GM12878 (cell line): ENCODE measurements at regions of chr2 and their contacts with region 1.

Region 1: GRCh38 chr2:122748552-122749011 is 993.1 kb downstream of the TSN start:
- DNase-seq: no peak
- ATAC-seq: peak; percentile 55
- H3K4me3 ChIP-seq: no peak overlapping the region
- H3K27ac ChIP-seq: no peak overlapping the region
- H3K4me1 ChIP-seq: no peaks in the 10 kb centered on the region
- H3K27me3 ChIP-seq: no peaks in the 10 kb centered on the region
- CTCF ChIP-seq: peak in 1 of 3 experiments; percentile 34; a peak in 2 of 6 replicates
- EP300 ChIP-seq: no peak
- POLR2A ChIP-seq: no peak
- RAD21 ChIP-seq: peak; percentile 51; the same call in 1 of the 2 replicates

Region 2: GRCh38 chr2:121974897-121975661 is 773.5 kb before region 1 on chr2:
- CTCF ChIA-PET with region 1: interaction called, 5 read pairs
- POLR2A ChIA-PET with region 1: no interaction called
- RAD21 ChIA-PET with region 1: interaction called, 3 read pairs
- SMC1A ChIA-PET with region 1: interaction called, 3 read pairs
- in situ Hi-C with region 1: loop called (anchors 10 kb)
- intact Hi-C with region 1: loop called (anchors 2 kb)
- DNase-seq: peak; percentile 60
- ATAC-seq: peak; percentile 98
- H3K4me3 ChIP-seq: peak overlapping the region; percentile 45; the same call in 1 of the 2 replicates
- H3K27ac ChIP-seq: no peak overlapping the region
- H3K4me1 ChIP-seq: no peaks in the 10 kb centered on the region
- H3K27me3 ChIP-seq: no peaks in the 10 kb centered on the region
- CTCF ChIP-seq: peak; percentile 52 to 75 (median 64); a peak in 5 of 6 replicates
- EP300 ChIP-seq: no peak
- POLR2A ChIP-seq: no peak
- RAD21 ChIP-seq: peak; percentile 76

Region 3: DNA sequence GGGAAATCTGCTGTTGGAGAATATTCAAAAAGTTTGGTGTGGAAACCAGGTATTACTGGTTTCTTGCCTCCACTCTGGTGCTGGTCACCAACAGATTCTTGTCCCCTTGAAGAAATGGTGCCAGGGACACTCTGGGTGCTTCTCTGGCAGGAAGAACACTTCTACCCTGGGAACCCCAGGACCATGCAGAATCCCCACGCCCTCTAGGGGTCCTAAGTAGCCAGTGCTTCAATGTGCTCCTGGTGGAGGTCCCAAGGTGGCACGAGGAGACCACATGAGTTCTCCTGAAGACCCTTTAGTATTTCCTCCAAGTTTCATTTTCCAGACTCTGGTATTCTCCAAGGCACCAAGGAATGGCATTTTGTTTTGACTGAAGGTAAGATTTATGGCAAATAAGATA is 612.5 kb before region 1 on chr2:
- CTCF ChIA-PET with region 1: no interaction called
- POLR2A ChIA-PET with region 1: no interaction called
- RAD21 ChIA-PET with region 1: no interaction called
- SMC1A ChIA-PET with region 1: no interaction called
- in situ Hi-C with region 1: no loop called
- intact Hi-C with region 1: loop called (anchors 5 kb)
- DNase-seq: no peak
- ATAC-seq: peak; percentile 91
- H3K4me3 ChIP-seq: no peak overlapping the region
- H3K27ac ChIP-seq: no peak overlapping the region
- H3K4me1 ChIP-seq: no peaks in the 10 kb centered on the region
- H3K27me3 ChIP-seq: no peaks in the 10 kb centered on the region
- CTCF ChIP-seq: peak; percentile 63 to 87 (median 82)
- EP300 ChIP-seq: no peak
- POLR2A ChIP-seq: no peak
- RAD21 ChIP-seq: peak; percentile 63

Region 4: GRCh38 chr2:122191341-122191740 is 557.2 kb before region 1 on chr2:
- CTCF ChIA-PET with region 1: interaction called, 6 read pairs
- POLR2A ChIA-PET with region 1: no interaction called
- RAD21 ChIA-PET with region 1: interaction called, 7 read pairs
- SMC1A ChIA-PET with region 1: interaction called, 11 read pairs
- in situ Hi-C with region 1: no loop called
- intact Hi-C with region 1: loop called (anchors 1 kb)
- DNase-seq: no peak
- ATAC-seq: peak; percentile 95
- H3K4me3 ChIP-seq: no peak overlapping the region
- H3K27ac ChIP-seq: no peak overlapping the region
- H3K4me1 ChIP-seq: no peaks in the 10 kb centered on the region
- H3K27me3 ChIP-seq: no peaks in the 10 kb centered on the region; a peak in 1 of 4 replicates
- CTCF ChIP-seq: peak; percentile 38 to 71 (median 57); a peak in 5 of 6 replicates
- EP300 ChIP-seq: no peak
- POLR2A ChIP-seq: no peak
- RAD21 ChIP-seq: peak; percentile 66

Region 5: GRCh38 chr2:122535960-122536505 is 212.5 kb before region 1 on chr2:
- CTCF ChIA-PET with region 1: interaction called, 4 read pairs
- POLR2A ChIA-PET with region 1: no interaction called
- RAD21 ChIA-PET with region 1: interaction called, 3 read pairs
- SMC1A ChIA-PET with region 1: interaction called, 7 read pairs
- in situ Hi-C with region 1: no loop called
- intact Hi-C with region 1: loop called (anchors 5 kb)
- DNase-seq: no peak
- ATAC-seq: no peak
- H3K4me3 ChIP-seq: no peak overlapping the region
- H3K27ac ChIP-seq: no peak overlapping the region
- H3K4me1 ChIP-seq: no peaks in the 10 kb centered on the region
- H3K27me3 ChIP-seq: no peaks in the 10 kb centered on the region
- CTCF ChIP-seq: no peak
- EP300 ChIP-seq: no peak
- POLR2A ChIP-seq: no peak
- RAD21 ChIP-seq: no peak

Region 6: DNA sequence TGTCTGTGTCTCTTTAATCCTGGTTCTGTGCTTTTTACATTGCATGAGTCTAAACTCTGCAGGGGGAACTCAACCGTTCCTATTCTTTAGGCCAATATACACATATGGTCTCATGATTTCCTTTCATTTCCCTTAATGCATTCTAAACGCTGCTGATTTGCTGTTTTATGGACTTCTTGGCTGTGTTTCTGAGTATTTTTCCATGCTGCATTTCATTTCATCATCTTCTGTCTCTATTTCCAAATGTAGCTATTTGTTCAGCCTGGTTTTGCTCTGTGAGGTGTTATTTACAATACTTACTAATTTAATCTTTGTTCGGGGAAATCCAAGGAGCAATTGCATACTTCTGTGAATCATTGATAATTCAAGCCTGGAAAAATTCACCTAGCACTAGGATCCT is 95.9 kb before region 1 on chr2:
- CTCF ChIA-PET with region 1: no interaction called
- POLR2A ChIA-PET with region 1: no interaction called
- RAD21 ChIA-PET with region 1: no interaction called
- SMC1A ChIA-PET with region 1: interaction called, 7 read pairs
- in situ Hi-C with region 1: no loop called
- intact Hi-C with region 1: loop called (anchors 5 kb)
- DNase-seq: no peak
- ATAC-seq: peak; percentile 37; the same call in 1 of the 3 replicates
- H3K4me3 ChIP-seq: no peak overlapping the region
- H3K27ac ChIP-seq: no peak overlapping the region
- H3K4me1 ChIP-seq: no peaks in the 10 kb centered on the region
- H3K27me3 ChIP-seq: no peaks in the 10 kb centered on the region
- CTCF ChIP-seq: no peak
- EP300 ChIP-seq: no peak
- POLR2A ChIP-seq: no peak
- RAD21 ChIP-seq: no peak

Region 7: DNA sequence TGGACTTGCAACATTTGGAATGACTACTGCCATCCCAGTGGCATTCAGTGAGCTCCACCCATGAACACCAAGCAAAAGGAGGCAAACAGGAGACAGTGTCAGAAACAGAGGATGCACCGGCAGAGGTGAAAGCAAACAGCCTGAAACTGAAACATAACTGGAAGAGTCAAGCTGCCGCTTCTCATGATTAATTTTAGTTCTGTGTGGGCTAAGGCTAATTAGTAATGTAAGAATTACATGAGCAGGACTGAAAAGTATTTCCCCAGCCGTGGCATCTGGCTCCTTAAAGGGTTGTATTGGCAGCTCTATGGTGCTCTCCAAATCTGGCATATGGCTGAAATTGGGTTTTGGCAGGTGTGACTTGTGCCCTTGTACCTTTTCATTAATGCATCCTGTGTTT is 115.0 kb after region 1 on chr2:
- CTCF ChIA-PET with region 1: interaction called, 3 read pairs
- POLR2A ChIA-PET with region 1: no interaction called
- RAD21 ChIA-PET with region 1: interaction called, 3 read pairs
- SMC1A ChIA-PET with region 1: interaction called, 11 read pairs
- in situ Hi-C with region 1: no loop called
- intact Hi-C with region 1: loop called (anchors 5 kb)
- DNase-seq: peak; percentile 38
- ATAC-seq: peak; percentile 89
- H3K4me3 ChIP-seq: no peak overlapping the region
- H3K27ac ChIP-seq: no peak overlapping the region
- H3K4me1 ChIP-seq: no peaks in the 10 kb centered on the region
- H3K27me3 ChIP-seq: no peaks in the 10 kb centered on the region
- CTCF ChIP-seq: no peak
- EP300 ChIP-seq: peak; percentile 40 to 48; a peak in 1 of 4 replicates
- POLR2A ChIP-seq: no peak
- RAD21 ChIP-seq: no peak